ENCODE measurements at regions of chr7 and their contacts with region 1.

Region 1: GRCh38 chr7:138002096-138002827 is 376 bp upstream of the CREB3L2 start:
- H3K4me3 Mint-ChIP-seq: peak overlapping the region; percentile 87
- H3K27ac Mint-ChIP-seq: peak overlapping the region; percentile 93
- H3K4me1 Mint-ChIP-seq: peaks cover 40% of the 10 kb centered on the region
- H3K27me3 Mint-ChIP-seq: no peaks in the 10 kb centered on the region

Region 2: DNA sequence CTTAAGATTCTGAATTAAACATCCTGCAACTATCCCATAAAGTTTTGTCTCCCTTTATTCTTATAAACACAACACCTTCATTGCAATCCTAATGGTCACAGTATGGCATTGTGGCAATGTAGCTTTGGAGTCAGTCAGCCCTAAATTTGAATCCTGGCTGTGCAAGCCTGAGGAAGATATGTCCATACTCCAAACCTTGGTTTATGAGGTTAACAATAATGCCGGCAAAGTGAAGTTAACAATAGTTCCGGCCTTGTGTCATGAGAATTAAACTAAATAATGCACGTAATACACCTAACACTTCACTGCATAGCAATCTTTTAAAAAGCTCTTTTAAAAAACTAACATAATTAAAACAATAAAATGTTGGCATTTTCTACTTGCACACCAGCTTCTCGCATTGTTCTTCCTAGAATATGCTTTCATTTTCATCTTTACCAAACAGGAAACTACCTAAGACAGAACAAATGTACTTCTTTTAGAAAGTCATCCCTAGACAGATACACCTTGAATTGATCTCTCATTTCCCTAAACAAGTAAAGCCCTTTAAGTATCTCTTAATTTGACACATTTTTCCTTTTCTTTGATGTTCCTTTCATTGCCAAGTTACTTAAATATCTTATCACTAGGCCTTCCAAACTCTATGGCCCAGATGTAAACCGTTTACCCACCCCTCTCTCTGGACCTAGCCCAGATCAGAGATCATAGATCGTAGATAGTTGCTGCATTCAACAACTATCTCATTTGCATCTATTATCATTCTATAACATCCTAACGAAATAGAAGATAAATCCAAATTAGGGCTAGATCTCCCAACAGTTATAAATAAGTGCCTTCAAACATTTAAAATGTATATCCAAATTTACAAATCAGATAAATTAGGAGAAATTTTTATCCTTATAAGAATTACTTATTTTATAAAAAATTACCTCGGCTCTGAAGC is 67.0 kb before region 1 on chr7:
- intact Hi-C with region 1: loop called (anchors 2 kb)
- H3K4me3 Mint-ChIP-seq: peak overlapping the region; percentile 64
- H3K27ac Mint-ChIP-seq: peak overlapping the region; percentile 81
- H3K4me1 Mint-ChIP-seq: peaks cover 68% of the 10 kb centered on the region
- H3K27me3 Mint-ChIP-seq: no peaks in the 10 kb centered on the region

Region 3: GRCh38 chr7:137961200-137962177 is 40.8 kb before region 1 on chr7:
- intact Hi-C with region 1: loop called (anchors 2 kb)
- H3K4me3 Mint-ChIP-seq: no peak overlapping the region
- H3K27ac Mint-ChIP-seq: peak overlapping the region; percentile 82
- H3K4me1 Mint-ChIP-seq: peaks cover 59% of the 10 kb centered on the region
- H3K27me3 Mint-ChIP-seq: no peaks in the 10 kb centered on the region

Region 4: DNA sequence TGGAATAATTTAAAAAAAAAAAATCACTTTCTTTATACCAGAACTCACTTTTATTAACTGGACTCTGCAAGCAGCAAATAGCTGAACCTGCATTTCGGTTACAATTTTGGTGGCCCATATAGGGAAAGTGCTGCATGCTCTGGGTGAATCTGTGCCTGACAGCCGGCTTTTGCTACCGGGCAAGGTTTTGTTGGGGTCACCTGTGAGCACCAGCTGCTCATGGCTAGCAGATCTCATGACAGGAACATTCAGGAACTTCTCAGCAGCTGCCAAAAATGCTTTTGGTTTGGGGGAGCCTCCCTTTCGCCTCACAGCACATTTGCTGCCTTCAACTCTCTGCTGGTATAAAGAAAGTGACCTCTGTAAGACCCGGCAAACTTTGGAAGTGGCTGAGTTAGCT is 12.8 kb after region 1 on chr7:
- intact Hi-C with region 1: no loop called
- H3K4me3 Mint-ChIP-seq: no peak overlapping the region
- H3K27ac Mint-ChIP-seq: no peak overlapping the region
- H3K4me1 Mint-ChIP-seq: no peaks in the 10 kb centered on the region
- H3K27me3 Mint-ChIP-seq: no peaks in the 10 kb centered on the region

Region 5: GRCh38 chr7:138459413-138460175 is 457.3 kb after region 1 on chr7:
- intact Hi-C with region 1: loop called (anchors 5 kb)
- H3K4me3 Mint-ChIP-seq: peak overlapping the region; percentile 93
- H3K27ac Mint-ChIP-seq: peak overlapping the region; percentile 97
- H3K4me1 Mint-ChIP-seq: peaks cover 21% of the 10 kb centered on the region
- H3K27me3 Mint-ChIP-seq: no peaks in the 10 kb centered on the region

Measured in dendritic cell treated with granulocyte-macrophage colony-stimulating factor and Interleukin-4, amounts not matched to agents 40 ng/mL and 50 ng/mL, for 4 days (primary cell).